HEK293 (cell line): ENCODE measurements at regions of chr6 and their contacts with region 1.

Region 1: GRCh38 chr6:148578245-148578732 is 168.5 kb upstream of the UST start:
- H3K4me3 ChIP-seq: no peak overlapping the region
- H3K27ac ChIP-seq: no peak overlapping the region
- H3K4me1 ChIP-seq: no peaks in the 10 kb centered on the region
- CTCF ChIP-seq: peak; percentile 99

Region 2: DNA sequence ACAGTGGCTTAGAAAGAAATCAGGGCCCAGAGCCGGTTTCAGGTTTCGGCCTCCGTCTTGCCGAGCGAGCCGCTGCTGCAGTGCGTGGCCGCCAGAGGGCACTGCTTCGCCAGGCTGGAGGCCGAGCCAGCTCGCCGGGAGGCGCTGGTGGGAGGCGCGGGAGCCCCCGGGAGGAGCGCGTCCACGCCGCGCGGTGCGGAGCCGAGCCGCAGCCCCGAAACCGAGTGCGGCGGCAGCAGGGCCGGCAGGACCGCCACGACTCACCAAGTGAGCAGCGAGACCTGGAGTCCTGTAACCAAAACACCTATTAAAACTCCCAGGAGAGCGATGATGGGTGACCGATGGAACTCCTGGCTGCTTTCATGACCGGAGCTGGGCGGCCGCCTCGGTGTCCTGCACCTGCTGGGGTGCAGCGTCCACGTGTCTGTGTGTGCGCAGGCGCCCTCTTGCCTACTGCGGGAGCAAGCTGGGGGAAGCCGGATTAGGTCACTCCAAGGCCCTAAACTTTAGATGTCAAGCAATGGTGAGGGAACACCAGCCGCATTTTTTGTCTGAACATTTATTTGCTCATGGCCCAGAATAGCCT is 18.3 kb before region 1 on chr6:
- CTCF ChIA-PET with region 1: interaction called, 41 read pairs
- POLR2A ChIA-PET with region 1: no interaction called
- H3K4me3 ChIP-seq: peak overlapping the region; percentile 49
- H3K27ac ChIP-seq: peak overlapping the region; percentile 29; the same call in 1 of the 2 replicates
- H3K4me1 ChIP-seq: no peaks in the 10 kb centered on the region
- CTCF ChIP-seq: peak; percentile 69

Region 3: DNA sequence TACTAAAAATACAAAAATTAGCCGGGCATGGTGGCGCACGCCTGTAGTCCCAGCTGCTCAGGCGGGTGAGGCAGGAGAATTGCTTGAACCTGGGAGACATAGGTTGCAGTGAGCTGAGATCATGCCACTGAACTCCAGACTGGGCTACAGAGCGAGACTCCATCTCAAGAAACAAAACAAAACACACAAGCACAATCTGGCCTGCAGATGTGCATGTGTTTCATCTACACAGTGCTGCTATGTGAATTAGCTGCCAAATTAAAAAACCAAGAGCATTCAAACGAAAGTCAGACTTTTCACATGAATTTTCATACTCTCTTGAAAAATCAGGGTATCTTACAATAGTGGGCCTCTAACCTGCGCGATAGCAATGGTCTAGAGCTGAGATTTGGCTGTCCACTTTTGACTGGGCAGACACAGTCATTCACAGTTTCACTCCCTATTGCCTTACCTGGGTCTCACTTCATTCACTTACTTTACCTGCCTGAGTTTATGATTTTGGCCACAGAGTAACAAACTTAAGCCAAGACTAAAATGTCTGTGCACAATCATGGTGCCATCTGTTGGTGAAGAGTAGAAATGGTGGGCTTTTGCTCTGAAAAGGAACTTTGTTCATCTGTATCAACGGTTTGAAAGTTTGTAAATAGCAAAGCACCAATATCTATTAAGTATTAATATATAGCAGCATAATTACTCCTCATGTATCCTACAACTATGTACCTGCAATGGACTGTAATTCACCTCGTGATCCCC is 30.1 kb after region 1 on chr6:
- CTCF ChIA-PET with region 1: interaction called, 16 read pairs
- POLR2A ChIA-PET with region 1: no interaction called
- H3K4me3 ChIP-seq: no peak overlapping the region
- H3K27ac ChIP-seq: no peak overlapping the region
- H3K4me1 ChIP-seq: no peaks in the 10 kb centered on the region
- CTCF ChIP-seq: no peak

Region 4: GRCh38 chr6:148947621-148948444 is 369.5 kb after region 1 on chr6:
- CTCF ChIA-PET with region 1: interaction called, 27 read pairs
- POLR2A ChIA-PET with region 1: no interaction called
- H3K4me3 ChIP-seq: no peak overlapping the region
- H3K27ac ChIP-seq: no peak overlapping the region
- H3K4me1 ChIP-seq: peaks cover 11% of the 10 kb centered on the region
- CTCF ChIP-seq: peak; percentile 66

Region 5: GRCh38 chr6:149028767-149029405 is 450.6 kb after region 1 on chr6:
- CTCF ChIA-PET with region 1: interaction called, 132 read pairs
- POLR2A ChIA-PET with region 1: no interaction called
- H3K4me3 ChIP-seq: no peak overlapping the region
- H3K27ac ChIP-seq: no peak overlapping the region
- H3K4me1 ChIP-seq: peaks cover 14% of the 10 kb centered on the region
- CTCF ChIP-seq: peak; percentile 19; the same call in 1 of the 2 replicates

Region 6: DNA sequence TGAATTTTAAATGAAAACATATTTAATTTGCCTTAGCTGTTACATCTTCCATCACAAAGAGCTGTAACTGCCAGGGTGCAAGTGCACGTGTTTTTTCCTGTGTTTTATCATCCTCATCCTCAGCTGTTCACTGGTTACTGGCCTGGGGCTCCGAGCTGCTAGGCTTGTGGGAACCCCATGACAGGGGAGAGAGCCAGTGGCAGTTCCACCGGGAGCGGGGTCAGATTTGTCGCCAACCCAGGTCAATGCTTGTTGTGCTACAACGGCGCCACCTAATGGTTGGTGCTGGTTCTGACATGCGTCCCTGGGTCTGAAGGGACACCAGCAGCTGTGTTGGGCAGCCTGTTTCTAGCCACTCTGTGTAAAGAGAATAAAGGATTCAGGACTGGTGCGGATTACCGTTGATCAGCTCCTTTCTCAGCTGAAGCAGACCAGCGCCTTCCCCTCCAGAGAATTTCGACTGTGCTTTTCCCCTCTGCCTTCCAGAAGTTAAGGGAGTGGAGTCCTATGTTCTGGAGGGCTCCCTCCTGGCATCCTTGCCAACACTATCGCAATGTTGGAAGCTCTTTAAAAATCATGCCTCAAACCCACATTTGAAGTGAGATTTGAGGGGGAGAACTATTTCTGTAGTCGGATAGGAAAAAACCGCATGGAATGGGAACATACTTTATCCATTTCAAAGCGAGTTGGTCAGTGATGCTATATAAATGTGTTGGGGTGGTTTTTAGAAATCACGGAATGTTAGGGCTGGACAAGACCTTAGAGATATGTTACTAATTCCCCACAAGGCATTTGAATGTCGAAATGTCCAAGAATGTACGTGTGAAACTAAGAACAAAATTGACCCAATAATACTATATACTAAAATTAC is 853.9 kb after region 1 on chr6:
- CTCF ChIA-PET with region 1: interaction called, 17 read pairs
- POLR2A ChIA-PET with region 1: no interaction called
- H3K4me3 ChIP-seq: no peak overlapping the region
- H3K27ac ChIP-seq: no peak overlapping the region
- H3K4me1 ChIP-seq: no peaks in the 10 kb centered on the region
- CTCF ChIP-seq: peak; percentile 89